GM12878 (cell line): ENCODE measurements at regions of chr18 and their contacts with region 1.

Region 1: DNA sequence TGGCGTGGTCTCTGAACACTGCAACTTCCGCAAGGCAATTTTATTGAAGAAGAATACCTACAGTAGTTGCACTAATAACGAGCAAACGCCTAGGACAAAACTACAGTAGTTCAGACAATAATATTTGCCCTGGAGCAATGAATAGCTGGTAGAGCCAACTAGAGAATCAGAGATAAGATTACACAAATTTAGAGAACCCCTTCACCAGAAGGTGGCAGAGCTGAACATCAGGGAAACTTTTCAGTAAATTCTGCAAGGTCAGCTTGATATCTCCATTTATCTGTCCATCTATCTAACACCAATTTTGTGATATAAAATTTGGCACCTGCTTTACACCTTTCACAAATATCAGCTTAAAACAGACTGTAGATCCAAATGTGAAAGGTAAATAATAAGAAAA is 43.8 kb downstream of the CDH19 start:
- DNase-seq: no peak
- ATAC-seq: peak; percentile 53; the same call in 2 of the 3 replicates
- H3K4me3 ChIP-seq: no peak overlapping the region
- H3K27ac ChIP-seq: no peak overlapping the region
- H3K4me1 ChIP-seq: no peaks in the 10 kb centered on the region
- H3K27me3 ChIP-seq: no peaks in the 10 kb centered on the region
- CTCF ChIP-seq: peak; percentile 11 to 36 (median 34); a peak in 4 of 6 replicates
- EP300 ChIP-seq: no peak
- POLR2A ChIP-seq: no peak
- RAD21 ChIP-seq: no peak

Region 2: DNA sequence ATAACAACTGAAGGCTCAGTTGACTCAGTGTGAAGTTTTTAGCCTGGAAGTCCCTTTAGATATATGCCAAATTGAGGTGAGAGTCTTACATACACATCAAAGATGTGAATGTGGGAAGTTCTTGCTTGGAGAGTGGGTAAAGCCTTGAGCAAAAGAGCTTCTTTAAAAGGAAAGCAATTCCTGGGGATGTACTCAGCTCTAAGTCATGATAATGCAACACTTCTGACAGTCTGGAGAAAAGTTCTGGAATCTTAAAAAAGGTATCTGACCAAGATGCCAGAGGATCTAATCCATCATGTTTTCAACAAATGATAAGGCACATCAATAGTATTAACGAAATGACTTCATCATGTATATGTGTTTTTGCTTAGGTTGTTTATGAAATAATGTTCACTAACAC is 307.4 kb before region 1 on chr18:
- CTCF ChIA-PET with region 1: no interaction called
- POLR2A ChIA-PET with region 1: no interaction called
- RAD21 ChIA-PET with region 1: no interaction called
- SMC1A ChIA-PET with region 1: no interaction called
- in situ Hi-C with region 1: no loop called
- intact Hi-C with region 1: no loop called
- DNase-seq: no peak
- ATAC-seq: no peak
- H3K4me3 ChIP-seq: no peak overlapping the region
- H3K27ac ChIP-seq: no peak overlapping the region
- H3K4me1 ChIP-seq: no peaks in the 10 kb centered on the region
- H3K27me3 ChIP-seq: no peaks in the 10 kb centered on the region
- CTCF ChIP-seq: no peak
- EP300 ChIP-seq: no peak
- POLR2A ChIP-seq: no peak
- RAD21 ChIP-seq: no peak

Region 3: GRCh38 chr18:66872277-66872676 is 312.2 kb after region 1 on chr18:
- CTCF ChIA-PET with region 1: interaction called, 5 read pairs
- POLR2A ChIA-PET with region 1: no interaction called
- RAD21 ChIA-PET with region 1: no interaction called
- SMC1A ChIA-PET with region 1: interaction called, 3 read pairs
- in situ Hi-C with region 1: no loop called
- intact Hi-C with region 1: loop called (anchors 5 kb)
- DNase-seq: no peak
- ATAC-seq: peak; percentile 54; the same call in 2 of the 3 replicates
- H3K4me3 ChIP-seq: no peak overlapping the region
- H3K27ac ChIP-seq: no peak overlapping the region
- H3K4me1 ChIP-seq: no peaks in the 10 kb centered on the region
- H3K27me3 ChIP-seq: no peaks in the 10 kb centered on the region
- CTCF ChIP-seq: peak in 1 of 3 experiments; percentile 16; a peak in 2 of 6 replicates
- EP300 ChIP-seq: no peak
- POLR2A ChIP-seq: no peak
- RAD21 ChIP-seq: peak; percentile 21; the same call in 1 of the 2 replicates

Region 4: GRCh38 chr18:66931010-66931409 is 370.9 kb after region 1 on chr18:
- CTCF ChIA-PET with region 1: no interaction called
- POLR2A ChIA-PET with region 1: no interaction called
- RAD21 ChIA-PET with region 1: no interaction called
- SMC1A ChIA-PET with region 1: no interaction called
- in situ Hi-C with region 1: no loop called
- intact Hi-C with region 1: no loop called
- DNase-seq: no peak
- ATAC-seq: no peak
- H3K4me3 ChIP-seq: no peak overlapping the region
- H3K27ac ChIP-seq: no peak overlapping the region
- H3K4me1 ChIP-seq: no peaks in the 10 kb centered on the region
- H3K27me3 ChIP-seq: no peaks in the 10 kb centered on the region
- CTCF ChIP-seq: no peak
- EP300 ChIP-seq: no peak
- POLR2A ChIP-seq: no peak
- RAD21 ChIP-seq: no peak